Heart right ventricle (tissue), 16 donors: ENCODE measurements at regions of chr5 and their contacts with region 1.

Region 1: DNA sequence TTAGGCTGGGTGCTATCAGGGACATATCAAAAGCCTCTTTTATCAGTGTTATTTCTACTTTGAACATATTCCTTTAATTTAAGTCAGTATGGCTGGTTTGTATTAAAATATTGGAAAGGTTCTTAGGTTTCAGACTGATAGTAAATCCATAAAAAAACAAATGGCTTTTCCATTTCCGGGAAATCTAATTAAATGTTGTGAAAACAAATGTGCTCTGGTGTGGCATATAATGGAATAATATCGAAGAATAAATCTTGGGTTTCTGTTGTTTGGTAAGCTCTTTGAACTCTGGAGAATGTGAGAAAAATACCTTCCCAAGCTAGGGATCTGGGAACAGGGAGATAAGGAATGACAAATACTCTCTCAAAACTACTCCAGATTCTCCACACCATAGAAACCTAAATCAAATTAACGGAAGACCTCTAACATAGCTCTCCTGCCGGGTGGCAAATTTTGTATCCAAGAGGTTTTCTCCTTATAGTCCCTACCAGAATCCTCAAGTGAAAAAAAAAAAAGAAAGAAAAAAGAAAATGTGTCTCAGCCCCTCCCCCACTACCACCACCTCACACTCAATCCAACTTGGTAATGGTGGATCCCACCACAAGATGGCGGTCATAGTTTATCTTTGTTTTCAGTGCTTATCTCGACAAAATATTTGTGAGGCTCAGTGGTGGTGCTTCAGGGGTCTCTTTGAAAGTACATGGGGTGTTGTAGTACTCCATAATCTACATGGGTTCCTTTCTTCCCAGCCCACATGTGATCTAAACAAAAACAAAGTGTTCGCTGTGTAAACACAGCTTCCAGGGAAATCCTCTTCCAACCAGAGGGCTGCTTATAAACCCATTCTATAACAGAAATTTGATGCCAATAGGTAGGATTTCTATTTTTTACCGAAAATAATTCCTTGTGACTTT is 54.6 kb upstream of the FST start:
- DNase-seq: no peak
- ATAC-seq: no peak
- H3K4me3 ChIP-seq: no peak overlapping the region
- H3K27ac ChIP-seq: no peak overlapping the region
- H3K4me1 ChIP-seq: peaks cover 0 to 7% (median 0%) of the 10 kb centered on the region in 9 donors
- H3K27me3 ChIP-seq: no peaks in the 10 kb centered on the region
- CTCF ChIP-seq: peak in 6 of 9 donors; percentile 13 to 45 (median 27)

Region 2: DNA sequence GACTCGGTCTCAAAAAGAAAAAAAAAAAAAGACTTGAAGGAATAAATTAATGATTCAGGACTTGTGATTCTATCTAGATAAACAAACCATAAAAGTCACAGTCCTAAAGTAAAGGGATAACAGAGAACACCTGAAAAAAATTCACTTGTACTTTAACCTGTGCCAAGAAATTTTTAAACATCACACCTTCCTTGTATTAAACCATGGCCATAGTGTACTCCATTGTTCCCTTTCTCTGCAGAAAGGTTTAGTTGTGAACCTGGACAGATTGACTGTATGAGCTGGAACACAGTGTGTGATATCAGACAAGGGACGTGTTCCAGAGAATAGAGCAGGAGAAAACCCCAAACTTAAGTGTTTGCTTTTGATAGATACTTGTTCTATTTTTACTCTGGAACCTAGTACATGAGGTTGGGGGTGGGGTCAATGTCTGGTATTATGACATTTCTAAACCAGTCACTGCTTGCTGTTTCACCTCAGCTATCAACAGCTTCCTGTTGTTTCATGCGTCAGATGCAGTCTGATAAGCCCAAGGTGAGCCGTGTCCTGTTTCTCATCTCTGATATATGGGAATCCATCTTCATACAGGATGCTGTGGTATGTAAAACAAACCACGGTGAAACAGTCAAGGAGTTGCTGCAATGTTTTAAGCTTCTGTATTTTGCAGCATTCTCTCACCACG is 700.6 kb before region 1 on chr5:
- intact Hi-C with region 1: no loop called
- DNase-seq: peak in 1 of 2 donors; percentile 12
- ATAC-seq: peak in 7 of 8 donors; percentile 45 to 72 (median 56)
- H3K4me3 ChIP-seq: no peak overlapping the region
- H3K27ac ChIP-seq: peak overlapping the region in 8 of 10 donors; percentile 15 to 79 (median 58)
- H3K4me1 ChIP-seq: peaks cover 0 to 45% (median 36%) of the 10 kb centered on the region in 9 donors
- H3K27me3 ChIP-seq: no peaks in the 10 kb centered on the region
- CTCF ChIP-seq: no peak

Region 3: GRCh38 chr5:53123702-53124101 is 302.2 kb before region 1 on chr5:
- intact Hi-C with region 1: no loop called
- DNase-seq: no peak
- ATAC-seq: no peak
- H3K4me3 ChIP-seq: no peak overlapping the region
- H3K27ac ChIP-seq: no peak overlapping the region
- H3K4me1 ChIP-seq: no peaks in the 10 kb centered on the region
- H3K27me3 ChIP-seq: no peaks in the 10 kb centered on the region
- CTCF ChIP-seq: peak in 6 of 9 donors; percentile 21 to 36 (median 26)

Region 4: DNA sequence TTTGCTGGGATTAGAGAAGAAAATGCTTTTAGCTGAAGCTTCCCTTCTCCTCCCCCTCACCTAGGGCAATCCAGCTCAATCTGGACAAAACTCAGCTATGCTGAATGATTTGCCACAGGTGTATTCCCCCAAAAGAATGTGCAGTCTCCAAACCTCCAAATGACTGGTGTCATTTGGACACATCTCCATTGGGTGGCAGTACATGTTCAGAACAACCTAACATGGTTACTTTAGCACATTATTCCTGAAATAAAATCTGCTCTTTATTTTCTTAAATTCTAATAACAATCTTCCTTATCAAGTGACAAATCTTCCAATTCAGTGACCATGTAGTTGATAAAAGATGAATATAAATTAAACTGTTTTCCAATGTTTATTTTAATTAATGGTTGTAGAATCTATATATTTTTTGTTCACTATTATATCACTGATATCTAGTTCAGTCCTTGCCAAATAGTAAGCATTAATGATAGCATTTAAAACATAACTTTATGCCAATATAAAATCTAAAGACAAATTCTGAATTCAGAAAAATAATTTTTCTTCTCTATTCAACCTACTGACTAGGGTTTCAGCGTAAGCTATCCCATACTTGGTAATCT is 255.0 kb before region 1 on chr5:
- intact Hi-C with region 1: loop called in 3 of 10 experiments (anchors 5 to 10 kb)
- DNase-seq: no peak
- ATAC-seq: peak in 1 of 8 donors; percentile 57
- H3K4me3 ChIP-seq: no peak overlapping the region
- H3K27ac ChIP-seq: no peak overlapping the region
- H3K4me1 ChIP-seq: peaks cover 4 to 29% (median 17%) of the 10 kb centered on the region in 9 donors
- H3K27me3 ChIP-seq: no peaks in the 10 kb centered on the region
- CTCF ChIP-seq: peak in 7 of 9 donors; percentile 46 to 70 (median 61)

Region 5: GRCh38 chr5:53262348-53262970 is 163.4 kb before region 1 on chr5:
- intact Hi-C with region 1: loop called in 2 of 10 experiments (anchors 5 to 10 kb)
- DNase-seq: no peak
- ATAC-seq: peak in 1 of 8 donors; percentile 34
- H3K4me3 ChIP-seq: no peak overlapping the region
- H3K27ac ChIP-seq: no peak overlapping the region
- H3K4me1 ChIP-seq: no peaks in the 10 kb centered on the region
- H3K27me3 ChIP-seq: no peaks in the 10 kb centered on the region
- CTCF ChIP-seq: peak in 8 of 9 donors; percentile 4 to 54 (median 42)